Activated CD4-positive, alpha-beta memory T cell treated with anti-CD3 and anti-CD28 coated beads, Interleukin-2, amount 10 ng/mL, durations not matched to agents 7 days and 5 days (primary cell): ENCODE measurements at regions of chr1 and their contacts with region 1.

Region 1: GRCh38 chr1:231240883-231241735 is at the start of gene GNPAT:
- DNase-seq: peak; percentile 91
- H3K4me3 Mint-ChIP-seq: peak within 1 kb of the TSS; percentile 85
- H3K27ac Mint-ChIP-seq: peak within 1 kb of the TSS; percentile 83
- H3K4me1 Mint-ChIP-seq: peaks cover 50% of the 10 kb centered on the region
- H3K27me3 Mint-ChIP-seq: no peaks in the 10 kb centered on the region
- total RNA-seq, gene GNPAT: 44.6 to 45.2 TPM

Region 2: DNA sequence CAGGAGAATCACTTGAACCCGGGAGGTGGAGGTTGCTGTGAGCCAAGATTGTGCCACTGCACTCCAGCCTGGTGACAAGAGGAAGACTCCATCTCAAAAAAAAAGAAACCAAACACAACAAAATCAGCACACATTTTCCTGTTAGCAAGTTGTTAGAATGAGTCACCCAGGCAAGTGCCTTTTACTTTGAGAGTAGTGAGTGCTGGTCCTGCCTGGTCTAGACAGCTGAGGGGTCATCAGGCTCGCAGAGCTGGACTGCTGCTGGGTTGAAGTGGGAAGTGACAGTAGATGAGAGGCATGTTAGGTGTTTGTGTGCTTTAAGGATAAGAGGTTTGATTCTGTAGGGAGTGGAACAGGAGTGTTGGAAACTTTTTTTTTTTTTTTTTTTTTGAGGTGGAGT is 31.8 kb after region 1 on chr1:
- CTCF ChIA-PET with region 1: no interaction called
- POLR2A ChIA-PET with region 1: interaction called, 12 read pairs
- DNase-seq: no peak
- H3K4me3 Mint-ChIP-seq: no peak overlapping the region
- H3K27ac Mint-ChIP-seq: peak overlapping the region; percentile 87
- H3K4me1 Mint-ChIP-seq: peaks cover 38% of the 10 kb centered on the region
- H3K27me3 Mint-ChIP-seq: no peaks in the 10 kb centered on the region

Region 3: DNA sequence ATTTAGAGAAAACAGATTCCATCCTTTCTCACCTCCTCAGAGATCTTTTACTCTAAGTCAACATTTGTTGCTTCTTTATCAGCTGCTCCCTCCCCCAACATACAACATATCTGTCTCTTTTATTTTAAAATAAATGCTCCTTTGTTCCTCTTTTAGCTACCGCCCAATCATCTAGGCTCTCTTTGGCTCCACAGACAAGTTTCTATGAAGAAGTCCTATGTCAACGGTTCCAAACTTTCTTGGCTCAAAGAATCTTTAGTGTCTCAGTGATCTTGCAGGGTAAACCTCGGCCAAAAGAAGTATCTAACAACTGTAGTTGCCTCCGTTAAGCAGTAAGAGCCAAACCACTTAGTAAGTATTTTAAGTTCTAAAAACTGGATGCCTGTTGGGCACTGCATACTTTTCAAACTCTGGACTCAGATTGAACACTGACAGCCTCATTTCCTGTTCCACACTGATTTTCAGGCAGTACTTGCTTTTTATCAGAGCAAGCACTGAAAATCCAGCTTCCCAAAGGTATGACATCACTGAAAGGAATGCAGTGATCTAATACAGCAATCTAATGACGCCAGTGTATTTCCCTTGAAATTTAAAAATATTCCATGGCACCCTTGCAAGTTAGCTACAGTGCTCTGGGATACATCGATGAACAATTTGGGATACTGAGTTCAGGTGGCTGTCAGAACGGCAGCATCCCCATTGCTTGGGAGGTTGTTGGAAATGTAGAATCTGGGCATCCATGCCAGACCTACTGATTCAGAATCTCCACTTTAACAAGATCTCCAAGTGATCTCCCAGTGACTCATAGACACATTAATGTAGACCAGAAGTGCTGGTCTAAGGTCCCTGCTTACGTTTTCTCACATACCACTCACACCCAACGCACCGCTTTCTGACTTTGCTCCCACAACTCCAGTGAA is 154.2 kb after region 1 on chr1:
- CTCF ChIA-PET with region 1: no interaction called
- POLR2A ChIA-PET with region 1: no interaction called
- DNase-seq: no peak
- H3K4me3 Mint-ChIP-seq: no peak overlapping the region
- H3K27ac Mint-ChIP-seq: no peak overlapping the region
- H3K4me1 Mint-ChIP-seq: peaks cover 22% of the 10 kb centered on the region
- H3K27me3 Mint-ChIP-seq: no peaks in the 10 kb centered on the region

Region 4: GRCh38 chr1:231421993-231422764 is 181.1 kb after region 1 on chr1 and contains the start of gene EGLN1:
- CTCF ChIA-PET with region 1: no interaction called
- POLR2A ChIA-PET with region 1: interaction called, 10 read pairs
- DNase-seq: peak; percentile 87
- H3K4me3 Mint-ChIP-seq: peak within 1 kb of the TSS; percentile 92
- H3K27ac Mint-ChIP-seq: peak within 1 kb of the TSS; percentile 90
- H3K4me1 Mint-ChIP-seq: peaks cover 36% of the 10 kb centered on the region
- H3K27me3 Mint-ChIP-seq: peaks cover 19% of the 10 kb centered on the region
- total RNA-seq, gene EGLN1: 38.8 to 38.9 TPM